GM12878 (cell line): ENCODE measurements at regions of chr9 and their contacts with region 1.

Region 1: DNA sequence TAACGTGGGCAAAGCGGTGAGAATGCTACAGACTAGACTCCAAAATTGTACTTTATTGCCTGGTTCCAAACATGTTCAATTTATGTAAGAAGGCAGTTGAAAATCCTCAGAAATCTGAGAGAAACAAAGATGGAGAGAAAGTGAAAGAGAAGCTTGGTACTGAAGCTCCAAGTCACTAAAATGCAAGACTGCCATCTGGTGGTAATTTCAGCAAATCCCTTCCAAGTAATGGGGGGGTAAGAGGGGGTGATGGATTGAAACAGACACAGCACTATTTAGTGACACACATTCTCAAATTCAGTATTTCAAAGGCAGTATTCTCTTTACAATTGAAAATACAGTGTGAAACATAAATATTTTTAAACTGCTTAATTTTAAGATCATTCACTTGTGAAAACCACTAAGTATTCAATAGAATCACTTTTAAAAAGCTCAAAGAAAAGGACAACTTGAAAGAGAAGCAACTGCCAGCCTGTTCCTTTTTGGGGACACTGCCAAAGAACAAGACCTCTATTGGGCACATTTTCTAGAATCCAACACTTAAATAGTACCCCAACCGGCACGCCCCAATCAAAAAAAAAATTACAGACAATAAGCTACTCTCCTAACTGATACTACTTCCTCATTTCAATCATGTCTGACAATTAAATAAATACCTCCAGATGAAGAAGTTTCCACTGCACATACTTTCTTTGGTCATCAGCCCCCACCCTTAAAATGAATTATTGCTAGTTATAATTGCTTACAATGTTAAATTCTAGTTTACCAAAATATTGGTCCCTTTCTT is 131.5 kb downstream of the AGTPBP1 start:
- DNase-seq: peak; percentile 44
- ATAC-seq: peak; percentile 99
- H3K4me3 ChIP-seq: no peak overlapping the region
- H3K27ac ChIP-seq: peak overlapping the region; percentile 48; the same call in 1 of the 2 replicates
- H3K4me1 ChIP-seq: peaks cover 4% of the 10 kb centered on the region; the same call in 1 of the 2 replicates
- H3K27me3 ChIP-seq: no peaks in the 10 kb centered on the region
- CTCF ChIP-seq: peak; percentile 68 to 88 (median 79); a peak in 5 of 6 replicates
- EP300 ChIP-seq: no peak
- POLR2A ChIP-seq: no peak
- RAD21 ChIP-seq: peak; percentile 87

Region 2: GRCh38 chr9:84397151-84397728 is 1213.0 kb before region 1 on chr9:
- CTCF ChIA-PET with region 1: interaction called, 35 read pairs
- POLR2A ChIA-PET with region 1: no interaction called
- RAD21 ChIA-PET with region 1: interaction called, 20 read pairs
- SMC1A ChIA-PET with region 1: interaction called, 21 read pairs
- in situ Hi-C with region 1: loop called (anchors 5 kb)
- intact Hi-C with region 1: loop called (anchors 1 kb)
- DNase-seq: peak; percentile 8
- ATAC-seq: peak; percentile 96
- H3K4me3 ChIP-seq: no peak overlapping the region
- H3K27ac ChIP-seq: no peak overlapping the region
- H3K4me1 ChIP-seq: no peaks in the 10 kb centered on the region
- H3K27me3 ChIP-seq: peaks cover 0 to 2% of the 10 kb centered on the region in 2 experiments; a peak in 1 of 4 replicates
- CTCF ChIP-seq: peak; percentile 77 to 91 (median 80)
- EP300 ChIP-seq: no peak
- POLR2A ChIP-seq: no peak
- RAD21 ChIP-seq: peak; percentile 87

Region 3: DNA sequence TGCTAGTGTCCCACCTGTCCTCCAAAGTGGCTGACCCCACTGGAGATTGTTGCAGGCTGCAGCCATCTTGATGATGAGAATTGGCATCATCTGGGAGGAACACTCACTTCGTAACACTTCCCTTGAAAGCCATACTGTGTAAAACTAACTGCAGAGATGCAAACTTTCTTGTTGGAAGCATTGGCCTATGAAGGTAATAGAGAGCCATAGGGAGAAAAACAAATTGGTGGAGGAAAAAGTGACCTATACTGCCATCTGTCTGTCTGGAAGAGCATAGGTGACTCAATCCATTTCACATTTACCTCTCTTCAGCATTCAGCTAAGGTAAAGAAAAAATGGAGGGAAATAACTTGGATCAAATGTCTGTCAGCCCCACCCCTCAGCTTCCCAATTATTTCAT is 467.3 kb before region 1 on chr9:
- CTCF ChIA-PET with region 1: interaction called, 8 read pairs
- POLR2A ChIA-PET with region 1: no interaction called
- RAD21 ChIA-PET with region 1: interaction called, 10 read pairs
- SMC1A ChIA-PET with region 1: interaction called, 6 read pairs
- in situ Hi-C with region 1: no loop called
- intact Hi-C with region 1: no loop called
- DNase-seq: peak; percentile 16
- ATAC-seq: peak; percentile 84
- H3K4me3 ChIP-seq: no peak overlapping the region
- H3K27ac ChIP-seq: no peak overlapping the region
- H3K4me1 ChIP-seq: no peaks in the 10 kb centered on the region
- H3K27me3 ChIP-seq: peaks cover 0 to 3% of the 10 kb centered on the region in 2 experiments; a peak in 1 of 4 replicates
- CTCF ChIP-seq: peak; percentile 63 to 81 (median 76)
- EP300 ChIP-seq: no peak
- POLR2A ChIP-seq: no peak
- RAD21 ChIP-seq: peak; percentile 87

Region 4: GRCh38 chr9:85200726-85201404 is 409.4 kb before region 1 on chr9:
- CTCF ChIA-PET with region 1: no interaction called
- POLR2A ChIA-PET with region 1: no interaction called
- RAD21 ChIA-PET with region 1: no interaction called
- SMC1A ChIA-PET with region 1: no interaction called
- in situ Hi-C with region 1: no loop called
- intact Hi-C with region 1: no loop called
- DNase-seq: no peak
- ATAC-seq: no peak
- H3K4me3 ChIP-seq: no peak overlapping the region
- H3K27ac ChIP-seq: no peak overlapping the region
- H3K4me1 ChIP-seq: no peaks in the 10 kb centered on the region
- H3K27me3 ChIP-seq: no peaks in the 10 kb centered on the region
- CTCF ChIP-seq: no peak
- EP300 ChIP-seq: no peak
- POLR2A ChIP-seq: no peak
- RAD21 ChIP-seq: no peak

Region 5: GRCh38 chr9:85290019-85290418 is 320.2 kb before region 1 on chr9:
- CTCF ChIA-PET with region 1: no interaction called
- POLR2A ChIA-PET with region 1: no interaction called
- RAD21 ChIA-PET with region 1: no interaction called
- SMC1A ChIA-PET with region 1: no interaction called
- in situ Hi-C with region 1: no loop called
- intact Hi-C with region 1: no loop called
- DNase-seq: no peak
- ATAC-seq: no peak
- H3K4me3 ChIP-seq: no peak overlapping the region
- H3K27ac ChIP-seq: no peak overlapping the region
- H3K4me1 ChIP-seq: no peaks in the 10 kb centered on the region
- H3K27me3 ChIP-seq: no peaks in the 10 kb centered on the region; a peak in 2 of 4 replicates
- CTCF ChIP-seq: no peak
- EP300 ChIP-seq: no peak
- POLR2A ChIP-seq: no peak
- RAD21 ChIP-seq: no peak

Region 6: GRCh38 chr9:85425153-85425611 is 185.1 kb before region 1 on chr9:
- CTCF ChIA-PET with region 1: interaction called, 8 read pairs
- POLR2A ChIA-PET with region 1: no interaction called
- RAD21 ChIA-PET with region 1: interaction called, 12 read pairs
- SMC1A ChIA-PET with region 1: interaction called, 6 read pairs
- in situ Hi-C with region 1: no loop called
- intact Hi-C with region 1: loop called (anchors 5 kb)
- DNase-seq: no peak
- ATAC-seq: peak; percentile 87
- H3K4me3 ChIP-seq: no peak overlapping the region
- H3K27ac ChIP-seq: no peak overlapping the region
- H3K4me1 ChIP-seq: no peaks in the 10 kb centered on the region
- H3K27me3 ChIP-seq: no peaks in the 10 kb centered on the region
- CTCF ChIP-seq: peak; percentile 61 to 68 (median 66)
- EP300 ChIP-seq: no peak
- POLR2A ChIP-seq: no peak
- RAD21 ChIP-seq: peak; percentile 69

Region 7: DNA sequence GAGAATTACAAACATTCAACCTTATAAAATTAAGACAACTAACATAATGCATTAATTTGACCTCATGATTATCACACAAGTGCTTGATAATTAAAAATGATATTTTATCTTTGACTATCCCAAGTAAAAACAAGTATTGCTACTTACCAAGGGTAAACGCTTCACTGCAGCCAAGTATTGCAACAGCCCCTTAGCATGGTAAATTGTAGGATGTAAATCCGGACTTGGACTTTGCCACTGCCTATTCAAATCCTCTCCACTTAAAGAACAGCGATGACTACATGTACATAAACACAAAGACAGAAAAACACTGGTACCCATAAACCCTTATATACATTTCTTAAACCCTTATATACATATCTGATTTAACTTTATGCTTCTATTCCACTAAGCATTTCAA is 23.6 kb before region 1 on chr9:
- CTCF ChIA-PET with region 1: interaction called, 13 read pairs
- POLR2A ChIA-PET with region 1: no interaction called
- RAD21 ChIA-PET with region 1: interaction called, 3 read pairs
- SMC1A ChIA-PET with region 1: interaction called, 4 read pairs
- in situ Hi-C with region 1: no loop called
- intact Hi-C with region 1: no loop called
- DNase-seq: no peak
- ATAC-seq: no peak
- H3K4me3 ChIP-seq: no peak overlapping the region
- H3K27ac ChIP-seq: no peak overlapping the region
- H3K4me1 ChIP-seq: no peaks in the 10 kb centered on the region
- H3K27me3 ChIP-seq: no peaks in the 10 kb centered on the region
- CTCF ChIP-seq: no peak
- EP300 ChIP-seq: no peak
- POLR2A ChIP-seq: no peak
- RAD21 ChIP-seq: no peak

Region 8: DNA sequence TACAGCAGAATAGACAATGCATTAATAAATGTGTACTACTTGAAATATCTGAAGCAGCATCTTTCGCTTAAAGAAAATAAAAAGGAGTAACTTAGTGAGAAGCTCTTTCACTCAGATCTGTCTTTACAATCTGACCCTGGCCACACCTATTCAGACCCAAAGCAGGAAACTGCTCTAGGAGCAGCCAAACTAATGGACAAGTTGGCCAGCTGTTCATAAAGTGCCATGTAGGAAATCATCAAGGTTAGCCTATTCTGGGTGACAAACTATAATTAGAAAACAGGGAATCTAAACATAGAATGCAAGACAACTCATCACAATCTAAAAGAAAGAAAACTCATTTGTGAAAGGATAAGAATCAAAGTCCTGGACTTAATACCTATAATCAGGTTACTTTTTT is 30.2 kb after region 1 on chr9:
- CTCF ChIA-PET with region 1: interaction called, 11 read pairs
- POLR2A ChIA-PET with region 1: no interaction called
- RAD21 ChIA-PET with region 1: interaction called, 5 read pairs
- SMC1A ChIA-PET with region 1: no interaction called
- in situ Hi-C with region 1: no loop called
- intact Hi-C with region 1: no loop called
- DNase-seq: no peak
- ATAC-seq: no peak
- H3K4me3 ChIP-seq: no peak overlapping the region
- H3K27ac ChIP-seq: no peak overlapping the region
- H3K4me1 ChIP-seq: no peaks in the 10 kb centered on the region
- H3K27me3 ChIP-seq: no peaks in the 10 kb centered on the region
- CTCF ChIP-seq: no peak
- EP300 ChIP-seq: no peak
- POLR2A ChIP-seq: no peak
- RAD21 ChIP-seq: no peak

Region 9: GRCh38 chr9:85716031-85716877 is 106.0 kb after region 1 on chr9:
- CTCF ChIA-PET with region 1: interaction called, 14 read pairs
- POLR2A ChIA-PET with region 1: no interaction called
- RAD21 ChIA-PET with region 1: interaction called, 9 read pairs
- SMC1A ChIA-PET with region 1: interaction called, 4 read pairs
- in situ Hi-C with region 1: no loop called
- intact Hi-C with region 1: no loop called
- DNase-seq: peak; percentile 48
- ATAC-seq: peak; percentile 87
- H3K4me3 ChIP-seq: peak overlapping the region; percentile 37; the same call in 1 of the 2 replicates
- H3K27ac ChIP-seq: peak overlapping the region; percentile 49; the same call in 1 of the 2 replicates
- H3K4me1 ChIP-seq: peaks cover 16% of the 10 kb centered on the region
- H3K27me3 ChIP-seq: no peaks in the 10 kb centered on the region
- CTCF ChIP-seq: peak; percentile 29 to 47 (median 46); a peak in 5 of 6 replicates
- EP300 ChIP-seq: peak in 1 of 2 experiments; percentile 19; a peak in 1 of 4 replicates
- POLR2A ChIP-seq: no peak
- RAD21 ChIP-seq: 0 out of 2 replicates have a peak, but pooled peaks have one; percentile 28

Region 10: GRCh38 chr9:86324308-86324707 is 714.0 kb after region 1 on chr9:
- CTCF ChIA-PET with region 1: no interaction called
- POLR2A ChIA-PET with region 1: no interaction called
- RAD21 ChIA-PET with region 1: no interaction called
- SMC1A ChIA-PET with region 1: no interaction called
- in situ Hi-C with region 1: no loop called
- intact Hi-C with region 1: no loop called
- DNase-seq: no peak
- ATAC-seq: peak; percentile 39; the same call in 1 of the 3 replicates
- H3K4me3 ChIP-seq: no peak overlapping the region
- H3K27ac ChIP-seq: no peak overlapping the region
- H3K4me1 ChIP-seq: no peaks in the 10 kb centered on the region; the same call in none of the 2 replicates
- H3K27me3 ChIP-seq: no peaks in the 10 kb centered on the region
- CTCF ChIP-seq: no peak
- EP300 ChIP-seq: no peak
- POLR2A ChIP-seq: no peak
- RAD21 ChIP-seq: 0 out of 2 replicates have a peak, but pooled peaks have one; percentile 2

Region 11: DNA sequence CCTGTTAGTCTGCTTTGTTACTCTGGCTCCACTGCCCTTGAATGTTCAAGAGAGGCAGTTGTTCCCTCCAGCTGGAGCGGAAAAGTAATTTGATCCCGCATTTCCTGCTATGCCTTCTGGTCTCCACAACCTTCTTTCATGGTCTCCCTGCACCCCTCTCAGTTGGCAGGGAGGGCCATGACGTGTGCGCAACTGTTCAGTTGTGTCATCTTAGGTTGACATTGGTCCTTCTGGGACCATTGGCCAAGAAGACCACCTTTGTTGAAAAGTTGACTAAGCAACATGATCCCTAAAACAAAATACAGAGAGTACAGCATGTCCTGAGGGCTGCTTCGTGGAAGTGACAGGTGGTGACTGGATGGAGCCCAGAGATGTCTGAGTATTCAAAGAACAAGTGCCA is 936.4 kb after region 1 on chr9:
- CTCF ChIA-PET with region 1: no interaction called
- POLR2A ChIA-PET with region 1: no interaction called
- RAD21 ChIA-PET with region 1: no interaction called
- SMC1A ChIA-PET with region 1: no interaction called
- in situ Hi-C with region 1: no loop called
- intact Hi-C with region 1: no loop called
- DNase-seq: no peak
- ATAC-seq: no peak
- H3K4me3 ChIP-seq: no peak overlapping the region
- H3K27ac ChIP-seq: no peak overlapping the region
- H3K4me1 ChIP-seq: no peaks in the 10 kb centered on the region
- H3K27me3 ChIP-seq: no peaks in the 10 kb centered on the region
- CTCF ChIP-seq: no peak
- EP300 ChIP-seq: no peak
- POLR2A ChIP-seq: no peak
- RAD21 ChIP-seq: no peak